Esophagus squamous epithelium (tissue), 5 donors: ENCODE measurements at regions of chr17 and their contacts with region 1.

Region 1: GRCh38 chr17:6831661-6832263 is at the start of gene TEKT1:
- DNase-seq: peak; percentile 22
- H3K4me3 ChIP-seq: peak within 1 kb of the TSS; percentile 20 to 63 (median 43)
- H3K27ac ChIP-seq: no peak within 1 kb of the TSS
- H3K4me1 ChIP-seq: peaks cover 6 to 12% (median 10%) of the 10 kb centered on the region in 3 donors
- H3K27me3 ChIP-seq: peaks cover 0 to 90% (median 6%) of the 10 kb centered on the region in 4 donors
- CTCF ChIP-seq: no peak
- POLR2A ChIP-seq: no peak
- total RNA-seq, gene TEKT1: not detected

Region 2: GRCh38 chr17:6092182-6092902 is 739.4 kb before region 1 on chr17:
- intact Hi-C with region 1: no loop called
- DNase-seq: no peak
- H3K4me3 ChIP-seq: no peak overlapping the region
- H3K27ac ChIP-seq: no peak overlapping the region
- H3K4me1 ChIP-seq: no peaks in the 10 kb centered on the region
- H3K27me3 ChIP-seq: peaks cover 0 to 7% (median 0%) of the 10 kb centered on the region in 4 donors
- CTCF ChIP-seq: no peak
- POLR2A ChIP-seq: no peak

Region 3: DNA sequence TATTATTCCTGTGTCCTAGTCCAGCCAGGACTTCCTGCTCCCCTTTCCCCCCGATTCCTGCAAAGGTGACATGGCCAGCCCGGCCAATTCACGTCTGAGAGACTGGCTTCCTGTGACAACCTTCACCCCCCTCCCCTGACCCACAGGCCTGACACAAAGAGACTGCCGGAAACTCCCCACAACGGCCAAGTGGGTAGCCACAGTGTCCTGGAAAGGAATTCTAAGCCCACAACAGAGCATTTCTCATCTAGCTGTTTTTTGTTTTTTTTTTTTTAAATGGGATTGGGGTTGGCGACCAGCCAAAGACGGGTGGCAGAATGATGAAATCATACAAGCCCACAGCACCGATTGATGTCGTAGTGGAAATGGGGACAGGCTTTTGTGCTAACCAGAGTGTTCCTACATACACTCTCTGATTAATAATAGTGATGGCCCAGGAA is 78.7 kb before region 1 on chr17:
- intact Hi-C with region 1: no loop called
- DNase-seq: no peak
- H3K4me3 ChIP-seq: no peak overlapping the region
- H3K27ac ChIP-seq: peak overlapping the region; percentile 59 to 86 (median 82)
- H3K4me1 ChIP-seq: peaks cover 21 to 60% (median 25%) of the 10 kb centered on the region in 3 donors
- H3K27me3 ChIP-seq: no peaks in the 10 kb centered on the region
- CTCF ChIP-seq: no peak
- POLR2A ChIP-seq: no peak

Region 4: DNA sequence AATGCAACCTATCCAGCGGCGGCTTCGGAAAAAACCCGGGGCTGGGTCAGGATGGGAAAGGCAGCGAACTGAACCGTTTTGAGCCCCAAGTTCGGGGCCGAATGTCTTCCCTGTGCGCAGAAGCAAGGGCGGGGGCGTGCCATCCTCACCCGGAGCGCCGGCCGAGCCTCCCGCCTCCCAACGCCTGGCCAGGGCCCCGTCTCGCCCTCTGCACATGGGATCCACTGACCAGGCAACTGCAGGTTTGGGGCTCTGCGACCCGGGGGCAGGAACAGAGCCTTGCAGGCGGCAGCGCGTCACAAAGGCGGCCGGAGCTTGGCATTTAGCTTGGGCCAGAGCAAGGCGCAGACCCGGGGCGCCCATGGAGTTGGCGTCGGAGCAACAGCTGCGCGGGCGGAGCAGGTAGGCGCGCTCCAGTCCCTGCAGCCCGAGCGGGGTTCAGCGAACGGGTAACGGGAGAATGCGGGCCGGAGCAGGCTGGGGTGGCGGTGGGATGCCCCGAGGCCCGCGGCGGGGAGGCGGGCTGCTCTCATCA is 55.8 kb before region 1 on chr17 and contains the start of gene FBXO39:
- intact Hi-C with region 1: no loop called
- DNase-seq: no peak
- H3K4me3 ChIP-seq: peak within 1 kb of the TSS; percentile 17 to 53 (median 36)
- H3K27ac ChIP-seq: no peak within 1 kb of the TSS
- H3K4me1 ChIP-seq: peaks cover 0 to 13% (median 6%) of the 10 kb centered on the region in 3 donors
- H3K27me3 ChIP-seq: peaks cover 0 to 45% (median 0%) of the 10 kb centered on the region in 4 donors
- CTCF ChIP-seq: no peak
- POLR2A ChIP-seq: no peak
- total RNA-seq, gene FBXO39: 0.48 to 2.9 (median 1.9) TPM

Region 5: GRCh38 chr17:6995431-6996255 is 163.9 kb after region 1 on chr17 and contains the start of gene ALOX12:
- intact Hi-C with region 1: loop called (anchors 10 kb)
- DNase-seq: no peak
- H3K4me3 ChIP-seq: peak within 1 kb of the TSS; percentile 46 to 69 (median 60)
- H3K27ac ChIP-seq: peak within 1 kb of the TSS; percentile 53 to 91 (median 86)
- H3K4me1 ChIP-seq: peaks cover 0 to 40% (median 12%) of the 10 kb centered on the region in 3 donors
- H3K27me3 ChIP-seq: no peaks in the 10 kb centered on the region
- CTCF ChIP-seq: no peak
- POLR2A ChIP-seq: peak in 2 of 4 donors; percentile 57 to 75
- total RNA-seq, gene ALOX12: 3.8 to 43.5 (median 26.4) TPM